GM12878 (cell line): ENCODE measurements at regions of chr14 and their contacts with region 1.

Region 1: DNA sequence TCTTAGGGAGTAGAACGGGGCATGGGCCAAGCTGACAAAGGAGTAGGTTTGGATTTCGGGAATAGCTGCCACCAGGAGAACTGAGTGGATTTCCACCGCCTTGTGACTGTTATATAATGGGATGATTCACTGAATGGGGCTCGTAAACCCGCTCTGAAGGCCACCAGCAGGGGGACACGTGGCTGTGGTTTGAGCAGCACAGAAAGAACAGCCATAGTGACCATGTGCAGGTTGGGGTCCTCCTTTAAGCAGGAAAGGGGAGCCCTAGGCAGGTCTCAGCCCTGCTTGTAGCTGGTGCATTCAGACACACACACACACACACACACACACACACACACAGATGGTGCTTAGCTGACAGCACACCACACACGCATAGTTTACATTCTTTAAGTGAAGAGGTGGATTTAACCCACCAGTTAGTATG is 8.6 kb upstream of the ASB2 start:
- DNase-seq: no peak
- ATAC-seq: peak; percentile 51
- H3K4me3 ChIP-seq: no peak overlapping the region
- H3K27ac ChIP-seq: no peak overlapping the region
- H3K4me1 ChIP-seq: peaks cover 18% of the 10 kb centered on the region
- H3K27me3 ChIP-seq: no peaks in the 10 kb centered on the region
- CTCF ChIP-seq: peak; percentile 19 to 40 (median 33); a peak in 5 of 6 replicates
- EP300 ChIP-seq: no peak
- POLR2A ChIP-seq: no peak
- RAD21 ChIP-seq: peak; percentile 41

Region 2: GRCh38 chr14:93953263-93953662 is 31.7 kb before region 1 on chr14:
- CTCF ChIA-PET with region 1: interaction called, 11 read pairs
- POLR2A ChIA-PET with region 1: interaction called, 6 read pairs
- RAD21 ChIA-PET with region 1: interaction called, 324 read pairs
- SMC1A ChIA-PET with region 1: interaction called, 409 read pairs
- in situ Hi-C with region 1: no loop called
- intact Hi-C with region 1: no loop called
- DNase-seq: no peak
- ATAC-seq: no peak
- H3K4me3 ChIP-seq: no peak overlapping the region
- H3K27ac ChIP-seq: no peak overlapping the region
- H3K4me1 ChIP-seq: peaks cover 59% of the 10 kb centered on the region
- H3K27me3 ChIP-seq: no peaks in the 10 kb centered on the region
- CTCF ChIP-seq: peak in 2 of 3 experiments; percentile 27 to 39; a peak in 3 of 6 replicates
- EP300 ChIP-seq: no peak
- POLR2A ChIP-seq: no peak
- RAD21 ChIP-seq: peak; percentile 57